ACHN (cell line): ENCODE measurements at regions of chr4 and their contacts with region 1.

Region 1: GRCh38 chr4:77193511-77194102 is 36.6 kb downstream of the CCNG2 start:
- DNase-seq: no peak

Region 2: DNA sequence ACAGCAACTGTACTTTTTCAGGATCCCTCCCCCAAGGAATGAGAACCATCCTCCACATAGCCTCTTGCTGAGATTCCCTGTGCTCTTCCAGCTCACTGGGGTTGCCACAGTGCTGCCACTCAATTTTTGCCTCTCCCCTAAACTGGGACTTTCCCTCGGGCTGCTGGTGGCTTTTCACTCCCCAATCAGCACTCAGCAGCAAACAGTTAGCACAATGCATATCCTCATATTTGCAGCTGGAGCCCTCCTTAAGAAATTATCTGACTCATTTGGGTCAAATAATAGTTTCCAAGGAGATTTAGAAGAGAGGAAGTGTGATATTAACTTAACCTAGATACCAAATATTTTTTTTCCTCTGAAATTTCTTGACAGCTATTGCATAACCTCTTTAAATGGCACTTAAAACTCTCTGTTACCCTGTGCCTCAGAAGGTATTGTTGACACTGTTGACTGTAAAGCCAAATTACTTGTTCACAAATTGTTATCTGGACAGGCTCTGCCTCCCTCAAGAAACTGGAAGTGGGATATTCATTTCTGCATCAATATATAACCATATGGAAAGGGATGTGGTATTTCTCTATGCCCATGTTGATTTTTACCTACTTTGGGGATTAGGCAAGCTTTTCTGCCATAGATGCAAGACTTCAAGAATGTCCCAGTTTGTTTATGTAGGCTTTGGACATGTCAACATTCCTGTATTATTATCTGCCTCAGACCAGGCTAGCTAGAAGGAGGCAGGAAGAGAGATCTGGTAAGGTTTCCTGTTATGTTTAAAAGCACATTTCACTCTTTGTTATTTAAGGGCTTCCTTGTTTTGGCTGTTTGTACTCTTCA is 186.0 kb before region 1 on chr4:
- in situ Hi-C with region 1: no loop called
- DNase-seq: no peak

Region 3: DNA sequence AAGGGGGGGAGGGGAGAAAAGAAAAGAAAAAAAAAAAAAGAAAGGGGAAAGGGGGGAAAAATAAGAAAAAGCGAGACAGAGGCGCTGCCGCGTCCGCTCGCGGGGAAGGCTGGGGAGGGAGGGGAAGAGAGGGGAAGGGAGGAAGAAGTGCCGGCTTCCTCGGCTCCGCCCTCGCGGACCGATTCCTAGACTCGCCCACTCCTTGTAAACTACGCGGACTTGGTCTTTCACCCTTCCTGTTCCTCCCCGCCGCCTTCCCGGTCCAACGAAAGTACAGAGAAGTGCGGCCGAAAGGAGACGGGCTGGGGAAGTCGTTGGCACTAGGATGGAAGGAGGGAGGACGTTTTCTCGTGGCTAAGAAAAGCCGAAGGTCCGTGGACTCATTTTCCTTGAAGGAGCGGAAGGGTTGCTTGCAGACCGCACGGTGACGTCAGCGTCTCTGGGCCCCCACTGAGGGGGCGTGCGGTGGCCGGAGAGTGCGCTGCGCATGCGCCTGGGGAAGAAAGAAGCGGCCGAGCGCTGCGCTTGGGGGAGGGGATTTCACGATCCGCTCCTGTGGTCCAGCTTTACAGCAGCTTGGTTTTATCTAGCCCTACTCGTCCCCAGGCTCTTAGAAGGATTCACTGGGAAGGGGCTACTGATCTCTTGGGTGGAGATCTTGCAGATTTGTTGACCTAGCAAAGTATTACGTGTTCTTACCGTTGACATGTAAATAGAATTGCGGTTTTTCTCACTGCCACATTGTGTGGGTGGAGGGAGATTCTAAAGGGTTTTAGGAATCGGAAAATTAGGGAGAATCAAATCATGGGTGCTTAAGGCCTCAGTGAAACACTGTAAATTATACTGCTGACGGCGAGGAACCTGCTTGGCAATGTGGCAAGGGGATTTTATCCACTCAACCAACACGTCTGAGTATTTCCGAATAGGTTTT is 117.5 kb before region 1 on chr4 and contains the start of gene CCNI:
- in situ Hi-C with region 1: loop called (anchors 25 kb)
- DNase-seq: peak; percentile 92

Region 4: DNA sequence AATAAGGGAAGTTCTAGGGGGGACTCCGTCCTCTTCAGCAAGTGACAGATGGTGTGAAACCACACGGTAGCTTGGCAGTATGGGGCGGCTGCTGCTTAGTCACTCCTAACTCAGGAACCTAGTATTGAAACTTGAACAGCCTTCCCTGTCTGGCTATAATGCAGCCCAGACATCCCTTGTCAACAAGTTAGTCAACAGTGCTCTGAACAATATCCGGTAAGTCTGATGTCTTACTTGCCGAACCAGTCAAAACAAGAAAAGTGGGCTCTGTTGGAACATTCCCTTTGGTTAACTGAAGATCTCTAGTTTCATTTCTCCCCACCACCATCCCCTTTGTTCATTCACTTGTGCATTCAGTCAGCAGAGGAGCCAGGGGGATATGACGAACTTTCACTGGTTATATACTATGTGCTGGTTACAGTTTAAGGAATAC is 393.4 kb after region 1 on chr4:
- in situ Hi-C with region 1: no loop called
- DNase-seq: no peak